ENCODE measurements at regions of chr17 and their contacts with region 1.

Region 1: GRCh38 chr17:1122533-1123392 is 57.0 kb downstream of the ABR start:
- DNase-seq: peak in 41 of 42 donors; percentile 47 to 89 (median 77)

Region 2: DNA sequence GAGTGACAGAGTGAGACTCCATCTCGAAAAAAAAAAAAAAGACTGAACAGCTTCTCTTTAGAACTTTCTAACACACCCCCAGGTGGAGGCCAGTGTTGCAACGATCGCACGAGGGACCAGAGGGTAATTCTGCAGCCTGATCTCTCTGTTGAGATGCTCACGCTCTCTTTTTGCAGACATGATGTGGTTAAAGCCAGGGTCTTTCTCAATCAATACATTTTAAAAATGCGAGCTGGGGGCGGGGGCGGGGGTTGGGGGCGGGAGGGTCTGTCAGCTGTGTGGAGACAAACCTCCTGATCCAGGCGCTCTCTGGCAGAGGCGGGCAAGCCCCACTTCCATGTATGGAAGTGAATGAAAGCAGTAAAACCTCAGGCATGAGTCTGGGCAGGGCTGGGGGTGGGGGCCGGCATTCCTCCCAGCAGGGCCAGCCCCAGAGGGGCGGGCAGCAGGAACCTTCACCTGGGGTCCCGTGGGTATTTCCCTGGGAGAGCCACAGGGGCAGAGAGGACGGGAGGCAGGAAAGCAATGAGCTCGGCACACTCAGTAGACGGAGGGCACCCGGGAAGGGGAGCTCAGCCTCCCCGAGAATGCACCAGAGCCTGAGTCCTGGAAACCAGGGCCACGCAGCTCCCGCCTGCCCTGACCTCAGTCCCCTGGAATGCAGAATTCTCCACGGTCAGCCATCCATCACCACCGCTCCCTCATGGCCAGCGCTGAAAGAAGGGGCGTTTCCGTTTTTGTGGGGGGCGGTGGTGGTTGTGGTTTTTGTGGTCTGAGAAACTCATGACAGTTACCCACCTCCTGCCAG is 171.2 kb before region 1 on chr17:
- intact Hi-C with region 1: no loop called
- DNase-seq: no peak

Region 3: GRCh38 chr17:1153795-1154546 is 31.2 kb after region 1 on chr17:
- intact Hi-C with region 1: no loop called
- DNase-seq: peak; percentile 64 to 96 (median 87)

Region 4: DNA sequence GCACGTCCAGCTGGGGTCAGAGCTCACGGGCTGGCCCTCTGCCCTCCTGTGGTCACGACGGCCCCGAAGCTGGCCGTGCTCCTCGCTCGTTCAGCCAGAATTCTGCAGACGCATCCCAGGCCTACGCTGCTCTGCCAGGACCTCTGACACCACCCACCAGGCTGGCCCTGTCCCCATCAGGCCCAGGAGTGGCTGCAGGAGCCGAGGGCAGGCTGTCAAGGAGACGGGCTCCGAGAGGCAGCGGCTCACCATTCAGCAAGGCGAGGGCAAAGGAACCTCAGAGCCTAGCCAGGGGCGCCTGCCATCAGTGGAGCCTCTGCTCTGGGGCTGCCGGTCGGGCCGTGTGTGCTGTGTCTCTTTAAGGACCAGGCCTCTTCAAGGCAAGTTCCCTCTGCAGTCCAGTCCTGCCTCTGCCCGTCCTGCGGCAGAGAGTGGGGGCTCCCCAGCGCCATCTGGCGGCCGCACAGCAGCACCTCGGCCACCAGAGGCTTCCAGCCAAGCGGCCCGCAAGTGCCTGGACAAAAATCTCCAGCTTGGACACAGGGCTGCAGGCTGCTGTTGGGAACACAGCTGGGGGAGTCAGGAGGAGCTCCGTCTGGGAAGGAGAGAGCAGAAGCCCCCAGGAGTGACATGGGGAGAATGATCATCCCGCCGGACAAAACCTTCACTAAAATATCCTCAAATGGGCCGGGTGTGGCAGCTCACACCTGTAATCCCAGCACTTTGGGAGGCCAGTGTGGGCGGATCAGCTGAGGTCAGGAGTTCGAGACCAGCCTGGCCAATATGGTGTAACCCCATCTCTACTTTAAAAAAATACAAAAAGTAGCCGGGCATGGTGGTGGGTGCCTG is 64.4 kb after region 1 on chr17:
- intact Hi-C with region 1: loop called (anchors 5 kb)
- DNase-seq: peak in 41 of 42 donors; percentile 51 to 90 (median 82)